ENCODE measurements at regions of chr6 and their contacts with region 1.

Region 1: GRCh38 chr6:53014063-53014462 is 19.0 kb upstream of the GSTA4 start:
- DNase-seq: peak; percentile 76
- ATAC-seq: peak; percentile 72
- H3K4me3 ChIP-seq: no peak overlapping the region
- H3K27ac ChIP-seq: no peak overlapping the region
- H3K4me1 ChIP-seq: peaks cover 13% of the 10 kb centered on the region
- H3K27me3 ChIP-seq: no peaks in the 10 kb centered on the region
- CTCF ChIP-seq: no peak
- POLR2A ChIP-seq: no peak
- RAD21 ChIP-seq: no peak

Region 2: DNA sequence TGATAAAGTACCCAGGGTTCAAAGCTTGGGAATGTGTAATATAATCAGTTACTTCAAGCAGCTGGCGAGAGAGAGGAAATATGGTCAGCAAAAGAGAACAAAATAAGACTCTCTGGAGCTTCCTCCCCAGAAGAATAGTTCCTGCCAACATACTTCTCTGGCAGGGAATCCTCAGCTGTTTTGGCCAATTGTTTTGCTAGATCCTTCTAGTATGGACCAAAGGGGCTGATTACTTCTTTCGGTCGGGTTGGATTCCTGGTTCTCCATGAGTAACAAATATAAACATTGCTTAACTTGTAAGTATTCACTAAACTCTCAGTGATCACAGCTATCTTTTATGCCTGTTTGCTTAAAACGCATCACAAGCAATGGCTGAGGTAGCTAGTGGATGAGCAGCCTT is 19.7 kb after region 1 on chr6:
- CTCF ChIA-PET with region 1: no interaction called
- POLR2A ChIA-PET with region 1: no interaction called
- dilution Hi-C with region 1: no loop called
- in situ Hi-C with region 1: no loop called
- intact Hi-C with region 1: loop called (anchors 2 kb)
- DNase-seq: peak; percentile 88
- ATAC-seq: peak; percentile 73
- H3K4me3 ChIP-seq: no peak overlapping the region
- H3K27ac ChIP-seq: peak overlapping the region; percentile 56; the same call in 1 of the 2 replicates
- H3K4me1 ChIP-seq: peaks cover 18% of the 10 kb centered on the region
- H3K27me3 ChIP-seq: no peaks in the 10 kb centered on the region
- CTCF ChIP-seq: no peak
- POLR2A ChIP-seq: no peak
- RAD21 ChIP-seq: no peak

Region 3: GRCh38 chr6:53956068-53956711 is 942.1 kb after region 1 on chr6:
- CTCF ChIA-PET with region 1: no interaction called
- POLR2A ChIA-PET with region 1: no interaction called
- dilution Hi-C with region 1: no loop called
- in situ Hi-C with region 1: no loop called
- intact Hi-C with region 1: no loop called
- DNase-seq: peak; percentile 70
- ATAC-seq: peak; percentile 97
- H3K4me3 ChIP-seq: no peak overlapping the region
- H3K27ac ChIP-seq: no peak overlapping the region
- H3K4me1 ChIP-seq: peaks cover 3% of the 10 kb centered on the region
- H3K27me3 ChIP-seq: no peaks in the 10 kb centered on the region
- CTCF ChIP-seq: peak; percentile 83
- POLR2A ChIP-seq: no peak
- RAD21 ChIP-seq: peak; percentile 89